Astrocyte of the cerebellum (primary cell): ENCODE measurements at regions of chr17 and their contacts with region 1.

Region 1: DNA sequence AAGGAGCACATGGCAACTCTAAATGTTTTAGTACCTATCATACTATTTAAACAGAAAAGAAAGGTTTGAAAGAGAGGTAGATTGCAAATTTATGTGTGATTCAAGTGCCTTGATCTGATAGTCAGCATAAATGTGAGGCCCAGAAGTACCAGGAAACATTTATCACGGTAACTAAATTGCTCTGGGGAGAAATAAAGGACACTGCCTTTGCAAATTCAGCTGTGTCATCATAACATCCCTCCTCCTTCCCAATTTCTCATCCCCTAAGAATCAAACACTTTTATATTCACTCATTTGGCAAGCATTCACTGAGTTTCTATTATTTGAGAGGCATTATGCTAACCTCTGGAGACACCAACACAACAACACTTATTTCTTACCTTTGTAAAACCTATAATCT is 563.4 kb upstream of the CA10 start:
- DNase-seq: no peak
- H3K4me3 ChIP-seq: no peak overlapping the region
- CTCF ChIP-seq: no peak

Region 2: DNA sequence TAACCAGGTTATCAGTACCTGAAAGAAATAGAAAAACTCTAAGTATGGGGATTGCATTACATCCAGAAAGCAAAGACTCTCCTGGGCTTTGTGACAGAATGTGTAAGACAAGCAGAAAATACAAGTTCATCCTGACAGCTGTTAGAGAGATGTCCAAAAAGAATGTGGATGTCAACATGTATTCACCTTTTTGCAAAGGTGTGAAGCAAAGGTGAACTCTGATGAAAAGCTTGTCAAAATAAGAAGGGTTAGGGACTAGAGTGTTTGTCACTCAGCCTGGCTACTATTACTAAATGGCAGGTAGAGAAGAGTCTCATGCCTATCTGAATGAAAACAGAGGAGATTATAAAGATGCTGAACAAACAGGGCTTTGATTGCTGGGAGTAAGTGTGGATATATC is 35.8 kb before region 1 on chr17:
- in situ Hi-C with region 1: loop called (anchors 5 kb)
- DNase-seq: no peak
- H3K4me3 ChIP-seq: no peak overlapping the region
- CTCF ChIP-seq: no peak

Region 3: GRCh38 chr17:52790359-52790955 is 68.5 kb after region 1 on chr17:
- in situ Hi-C with region 1: no loop called
- DNase-seq: no peak
- H3K4me3 ChIP-seq: no peak overlapping the region
- CTCF ChIP-seq: no peak